ENCODE measurements at regions of chr1 and their contacts with region 1.

Region 1: DNA sequence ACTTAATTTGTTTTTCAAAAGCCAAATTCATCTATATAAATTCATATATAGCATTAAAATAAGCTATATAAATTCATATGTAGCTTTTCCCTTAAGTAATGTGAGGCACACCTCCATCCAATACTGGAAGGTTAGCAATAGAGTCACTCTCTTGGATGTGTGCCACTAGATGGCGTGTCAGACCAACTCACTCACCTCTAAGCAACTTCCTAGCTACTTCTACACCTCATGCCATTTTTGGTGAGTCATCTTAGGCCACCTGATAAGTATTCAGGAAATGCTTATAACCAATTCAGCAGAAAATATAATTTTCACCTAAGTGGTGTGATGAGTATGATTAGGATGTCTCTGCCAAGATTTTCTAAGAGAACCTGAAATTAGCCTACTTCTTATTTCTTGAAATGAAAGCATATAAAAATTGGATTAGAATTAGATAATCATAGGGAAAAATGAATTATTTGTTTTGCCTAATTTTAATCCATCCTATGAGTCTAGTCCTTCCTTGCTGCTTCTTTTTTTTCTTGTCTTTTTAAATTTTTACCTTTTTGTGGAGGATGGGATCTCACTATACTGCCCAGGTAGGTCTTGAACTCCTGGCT is 34.4 kb upstream of the TADA1 start:
- DNase-seq: peak; percentile 36 to 53
- ATAC-seq: peak; percentile 93 to 94
- H3K4me3 ChIP-seq: no peak overlapping the region
- H3K27ac ChIP-seq: no peak overlapping the region
- H3K4me1 ChIP-seq: no peaks in the 10 kb centered on the region
- H3K27me3 ChIP-seq: no peaks in the 10 kb centered on the region
- CTCF ChIP-seq: peak; percentile 33 to 63 (median 52)
- POLR2A ChIP-seq: no peak

Region 2: GRCh38 chr1:167043752-167044488 is 133.4 kb after region 1 on chr1:
- in situ Hi-C with region 1: loop called in 1 of 4 experiments (anchors 5 kb)
- intact Hi-C with region 1: no loop called
- DNase-seq: peak in 1 of 2 donors; percentile 33
- ATAC-seq: peak; percentile 42 to 70
- H3K4me3 ChIP-seq: peak overlapping the region; percentile 44 to 56 (median 48)
- H3K27ac ChIP-seq: no peak overlapping the region
- H3K4me1 ChIP-seq: peaks cover 0 to 6% of the 10 kb centered on the region in 2 donors
- H3K27me3 ChIP-seq: peaks cover 0 to 2% (median 0%) of the 10 kb centered on the region in 3 donors
- CTCF ChIP-seq: no peak
- POLR2A ChIP-seq: no peak